ENCODE measurements at regions of chr12 and their contacts with region 1.

Region 1: DNA sequence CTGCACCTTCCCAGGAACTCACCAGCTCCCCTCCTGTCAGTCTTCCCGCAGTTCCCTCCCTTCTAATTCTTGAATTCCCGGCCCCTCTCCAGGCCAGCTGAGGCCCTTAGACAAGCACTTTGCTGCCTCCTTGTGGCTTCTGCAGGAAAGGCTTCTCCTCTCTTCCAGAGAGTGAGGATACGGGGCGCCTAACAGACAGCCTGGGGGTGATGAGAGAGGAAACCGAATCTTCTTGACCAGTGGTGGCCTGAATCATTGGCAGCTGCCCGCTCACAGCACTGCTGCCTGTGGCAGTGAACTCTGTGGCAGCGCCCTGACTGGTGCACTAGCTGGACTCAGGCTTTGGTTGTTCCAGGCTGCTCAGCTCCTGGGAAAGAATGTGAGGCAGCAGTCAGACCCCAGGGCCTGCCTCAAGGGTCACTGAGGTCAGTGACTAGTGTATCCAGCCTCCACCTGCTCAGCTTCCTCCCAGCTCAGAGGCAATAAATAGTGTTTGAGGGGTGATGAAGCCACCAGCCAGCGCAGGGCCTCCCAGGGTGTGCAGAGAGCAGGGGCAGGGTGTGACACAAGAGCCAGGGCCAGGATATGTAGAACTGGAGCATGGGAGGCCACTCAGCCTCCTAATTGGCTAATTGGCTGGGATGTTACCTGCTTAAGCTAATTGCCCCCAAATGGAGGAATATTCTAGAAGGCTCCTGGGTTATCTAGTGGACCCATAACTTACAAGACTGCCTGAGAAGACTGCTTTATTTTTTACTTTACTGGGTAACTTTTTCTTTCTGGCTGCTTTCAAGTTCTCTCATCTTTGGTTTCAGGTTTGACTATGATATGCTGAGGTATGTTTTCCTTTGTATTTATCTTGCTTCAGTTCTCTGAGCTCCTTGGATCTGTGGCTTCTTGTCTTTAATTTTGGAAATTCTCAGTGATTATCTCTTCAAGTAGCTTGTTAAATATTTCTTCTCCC is 12.9 kb upstream of the MCRS1 start:
- DNase-seq: peak; percentile 93
- H3K4me3 ChIP-seq: no peak overlapping the region
- H3K4me3 Mint-ChIP-seq: peak overlapping the region; percentile 19
- H3K27ac Mint-ChIP-seq: peak overlapping the region; percentile 21
- H3K4me1 ChIP-seq: peaks cover 30% of the 10 kb centered on the region
- H3K4me1 Mint-ChIP-seq: peaks cover 26% of the 10 kb centered on the region
- H3K27me3 ChIP-seq: no peaks in the 10 kb centered on the region
- H3K27me3 Mint-ChIP-seq: no peaks in the 10 kb centered on the region
- CTCF ChIP-seq: peak; percentile 90 to 97

Region 2: GRCh38 chr12:48796976-48797375 is 783.9 kb before region 1 on chr12:
- CTCF ChIA-PET with region 1: no interaction called
- POLR2A ChIA-PET with region 1: no interaction called
- intact Hi-C with region 1: no loop called
- DNase-seq: no peak
- H3K4me3 ChIP-seq: no peak overlapping the region
- H3K4me3 Mint-ChIP-seq: no peak overlapping the region
- H3K27ac Mint-ChIP-seq: no peak overlapping the region
- H3K4me1 ChIP-seq: peaks cover 25% of the 10 kb centered on the region
- H3K4me1 Mint-ChIP-seq: peaks cover 9% of the 10 kb centered on the region
- H3K27me3 ChIP-seq: no peaks in the 10 kb centered on the region
- H3K27me3 Mint-ChIP-seq: no peaks in the 10 kb centered on the region
- CTCF ChIP-seq: no peak

Region 3: DNA sequence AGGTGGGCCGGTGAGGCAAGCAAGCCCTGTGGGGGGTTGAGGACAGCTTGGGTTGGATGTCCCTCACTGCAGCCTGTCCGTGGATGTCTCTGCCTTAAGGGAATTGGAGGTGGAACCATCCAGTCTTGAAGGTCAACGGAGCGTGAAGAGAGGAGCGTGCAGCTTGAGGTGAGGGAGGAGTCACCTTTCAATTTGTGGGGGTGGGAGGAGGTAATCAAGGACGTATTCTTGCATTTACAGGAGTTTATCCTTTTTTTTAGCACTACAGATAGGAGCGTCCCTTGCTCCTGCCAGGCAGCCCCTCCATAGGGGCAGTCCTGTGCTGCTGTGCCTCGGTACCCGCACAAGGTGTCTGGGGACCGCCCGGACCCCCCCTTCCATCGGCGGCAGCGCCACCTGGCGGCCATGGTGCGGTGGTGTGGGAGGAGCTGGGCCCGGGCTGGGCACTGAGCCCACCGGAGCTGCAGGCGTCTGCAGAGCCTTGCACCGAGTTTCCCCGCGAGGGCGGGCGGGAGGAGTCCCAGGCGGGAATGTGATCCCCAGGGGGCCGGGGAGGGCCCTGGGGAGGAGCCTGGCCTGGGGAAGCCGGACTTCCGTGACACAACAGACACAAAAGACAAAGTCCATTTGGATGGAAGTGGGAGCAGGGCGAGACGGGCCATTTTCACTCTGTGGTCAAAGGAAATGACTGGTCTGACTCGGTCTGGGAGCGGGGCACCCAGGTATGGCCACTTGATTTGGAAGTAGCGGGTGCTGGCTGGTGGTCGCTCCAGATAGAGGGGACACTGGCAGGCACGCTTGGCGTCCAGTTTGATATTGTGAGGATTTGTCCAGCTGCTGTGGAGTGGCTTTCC is 233.2 kb before region 1 on chr12:
- CTCF ChIA-PET with region 1: interaction called, 13 read pairs
- POLR2A ChIA-PET with region 1: no interaction called
- intact Hi-C with region 1: no loop called
- DNase-seq: peak; percentile 98 to 99
- H3K4me3 ChIP-seq: peak overlapping the region; percentile 43
- H3K4me3 Mint-ChIP-seq: peak overlapping the region; percentile 90
- H3K27ac Mint-ChIP-seq: peak overlapping the region; percentile 98
- H3K4me1 ChIP-seq: peaks cover 16% of the 10 kb centered on the region
- H3K4me1 Mint-ChIP-seq: peaks cover 14% of the 10 kb centered on the region
- H3K27me3 ChIP-seq: no peaks in the 10 kb centered on the region
- H3K27me3 Mint-ChIP-seq: no peaks in the 10 kb centered on the region
- CTCF ChIP-seq: peak; percentile 97 to 98

Region 4: GRCh38 chr12:49366652-49367380 is 214.0 kb before region 1 on chr12:
- CTCF ChIA-PET with region 1: interaction called, 14 read pairs
- POLR2A ChIA-PET with region 1: interaction called, 8 read pairs
- intact Hi-C with region 1: loop called (anchors 1 kb)
- DNase-seq: peak; percentile 93 to 100
- H3K4me3 ChIP-seq: peak overlapping the region; percentile 88
- H3K4me3 Mint-ChIP-seq: peak overlapping the region; percentile 75
- H3K27ac Mint-ChIP-seq: peak overlapping the region; percentile 38
- H3K4me1 ChIP-seq: peaks cover 17% of the 10 kb centered on the region
- H3K4me1 Mint-ChIP-seq: no peaks in the 10 kb centered on the region
- H3K27me3 ChIP-seq: no peaks in the 10 kb centered on the region
- H3K27me3 Mint-ChIP-seq: no peaks in the 10 kb centered on the region
- CTCF ChIP-seq: peak in 1 of 2 experiments; percentile 30

Region 5: GRCh38 chr12:49515266-49515665 is 65.6 kb before region 1 on chr12:
- CTCF ChIA-PET with region 1: interaction called, 11 read pairs
- POLR2A ChIA-PET with region 1: no interaction called
- intact Hi-C with region 1: no loop called
- DNase-seq: no peak
- H3K4me3 ChIP-seq: no peak overlapping the region
- H3K4me3 Mint-ChIP-seq: no peak overlapping the region
- H3K27ac Mint-ChIP-seq: no peak overlapping the region
- H3K4me1 ChIP-seq: no peaks in the 10 kb centered on the region
- H3K4me1 Mint-ChIP-seq: no peaks in the 10 kb centered on the region
- H3K27me3 ChIP-seq: no peaks in the 10 kb centered on the region
- H3K27me3 Mint-ChIP-seq: no peaks in the 10 kb centered on the region
- CTCF ChIP-seq: no peak

Region 6: DNA sequence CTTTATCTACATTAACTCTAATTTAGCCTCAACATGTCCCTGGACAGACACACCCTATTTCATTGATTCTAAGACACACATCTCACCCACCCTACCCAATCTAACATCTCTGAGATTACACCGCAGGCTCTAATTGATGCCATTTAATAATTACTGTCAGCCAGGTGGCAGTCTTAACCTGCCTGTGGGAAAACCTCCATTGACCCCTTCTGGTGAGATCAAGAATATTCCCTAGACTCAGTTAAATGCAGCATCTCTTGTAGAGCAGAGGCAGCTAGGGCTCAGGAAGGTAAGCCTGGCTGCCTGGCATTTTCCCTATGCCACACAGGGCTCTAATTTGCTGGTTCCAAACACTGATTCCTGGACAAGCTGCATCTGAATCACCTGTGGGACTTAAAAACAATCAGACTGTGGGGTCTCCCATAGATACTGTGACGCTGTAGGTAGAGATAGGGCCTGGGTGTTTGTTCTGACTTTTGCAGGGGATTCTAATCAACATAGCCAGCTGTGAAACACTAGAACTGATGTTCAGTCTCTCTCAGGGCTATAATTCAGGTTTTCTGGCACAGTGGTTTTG is 27.3 kb before region 1 on chr12:
- CTCF ChIA-PET with region 1: interaction called, 46 read pairs
- POLR2A ChIA-PET with region 1: no interaction called
- intact Hi-C with region 1: loop called (anchors 1 kb)
- DNase-seq: peak in 1 of 2 experiments; percentile 65
- H3K4me3 ChIP-seq: no peak overlapping the region
- H3K4me3 Mint-ChIP-seq: no peak overlapping the region
- H3K27ac Mint-ChIP-seq: no peak overlapping the region
- H3K4me1 ChIP-seq: no peaks in the 10 kb centered on the region
- H3K4me1 Mint-ChIP-seq: no peaks in the 10 kb centered on the region
- H3K27me3 ChIP-seq: no peaks in the 10 kb centered on the region
- H3K27me3 Mint-ChIP-seq: no peaks in the 10 kb centered on the region
- CTCF ChIP-seq: peak; percentile 81 to 93

Region 7: DNA sequence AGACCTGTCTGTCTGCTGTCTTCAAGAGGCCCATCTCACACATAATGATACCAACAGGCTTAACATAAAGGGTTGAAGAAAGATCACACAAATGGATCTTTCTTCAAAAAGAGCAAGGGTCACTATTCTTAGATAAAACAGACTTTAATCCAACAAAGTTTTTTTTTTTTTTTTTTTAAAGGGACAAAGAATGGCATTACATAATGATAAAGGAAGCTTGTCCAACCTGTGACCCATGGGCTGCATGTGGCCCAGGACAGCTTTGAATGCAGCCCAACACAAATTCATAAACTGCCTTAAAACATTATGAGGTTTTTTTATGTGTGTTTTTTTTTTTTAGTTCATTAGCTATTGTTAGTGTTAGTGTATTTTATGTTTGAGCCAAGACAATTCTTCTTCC is 31.4 kb after region 1 on chr12:
- CTCF ChIA-PET with region 1: interaction called, 17 read pairs
- POLR2A ChIA-PET with region 1: interaction called, 7 read pairs
- intact Hi-C with region 1: no loop called
- DNase-seq: peak in 1 of 2 experiments; percentile 53
- H3K4me3 ChIP-seq: no peak overlapping the region
- H3K4me3 Mint-ChIP-seq: no peak overlapping the region
- H3K27ac Mint-ChIP-seq: peak overlapping the region; percentile 74
- H3K4me1 ChIP-seq: peaks cover 30% of the 10 kb centered on the region
- H3K4me1 Mint-ChIP-seq: peaks cover 20% of the 10 kb centered on the region
- H3K27me3 ChIP-seq: no peaks in the 10 kb centered on the region
- H3K27me3 Mint-ChIP-seq: no peaks in the 10 kb centered on the region
- CTCF ChIP-seq: no peak